ENCODE measurements at regions of chr3 and their contacts with region 1.

Region 1: GRCh38 chr3:150495563-150496168 is 50.6 kb downstream of the SERP1 start:
- DNase-seq: no peak
- H3K4me3 ChIP-seq: no peak overlapping the region
- H3K27ac ChIP-seq: no peak overlapping the region
- H3K4me1 ChIP-seq: no peaks in the 10 kb centered on the region
- H3K27me3 ChIP-seq: no peaks in the 10 kb centered on the region
- CTCF ChIP-seq: peak; percentile 67 to 78 (median 71)

Region 2: DNA sequence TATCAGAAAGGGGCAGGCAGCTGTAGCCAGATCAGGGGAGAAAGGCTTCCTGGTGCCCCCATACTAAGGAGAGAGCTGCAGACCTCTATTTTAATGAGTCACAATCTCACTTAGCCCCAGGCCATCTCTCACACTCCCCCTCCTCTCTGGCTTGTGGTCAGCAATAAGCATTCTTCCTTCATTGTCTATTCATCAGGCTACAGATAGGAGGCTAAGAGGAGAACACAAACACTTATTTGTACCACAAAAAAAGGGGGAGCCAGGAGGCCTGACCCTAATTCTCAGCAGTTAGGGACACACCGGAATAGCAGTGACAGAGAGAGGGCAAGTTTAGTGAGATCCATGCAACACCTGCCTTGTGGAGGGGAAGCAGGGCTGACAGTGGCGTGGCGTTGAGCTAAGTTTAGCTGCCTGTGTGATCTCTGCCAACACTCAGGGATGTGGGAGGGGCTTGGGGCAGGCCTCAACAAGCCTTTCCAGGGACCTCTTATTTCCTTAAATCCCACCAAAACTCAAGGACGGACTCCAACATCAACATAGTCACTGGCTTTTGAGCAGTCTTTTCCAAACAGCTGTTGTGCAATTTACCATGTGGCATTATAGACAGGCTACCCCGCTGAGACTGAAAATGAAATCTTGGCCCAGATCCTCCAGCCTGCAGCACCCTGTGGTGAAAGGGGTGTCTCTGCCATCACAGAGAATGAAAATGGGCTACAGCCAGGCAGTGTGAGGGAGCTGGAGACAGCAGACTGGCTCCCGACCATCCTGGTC is 279.4 kb before region 1 on chr3:
- intact Hi-C with region 1: loop called (anchors 2 kb)
- DNase-seq: peak; percentile 33 to 84
- H3K4me3 ChIP-seq: peak overlapping the region in 1 of 2 donors; percentile 39
- H3K27ac ChIP-seq: peak overlapping the region; percentile 75 to 80
- H3K4me1 ChIP-seq: peaks cover 5 to 10% of the 10 kb centered on the region in 2 donors
- H3K27me3 ChIP-seq: no peaks in the 10 kb centered on the region
- CTCF ChIP-seq: no peak

Region 3: DNA sequence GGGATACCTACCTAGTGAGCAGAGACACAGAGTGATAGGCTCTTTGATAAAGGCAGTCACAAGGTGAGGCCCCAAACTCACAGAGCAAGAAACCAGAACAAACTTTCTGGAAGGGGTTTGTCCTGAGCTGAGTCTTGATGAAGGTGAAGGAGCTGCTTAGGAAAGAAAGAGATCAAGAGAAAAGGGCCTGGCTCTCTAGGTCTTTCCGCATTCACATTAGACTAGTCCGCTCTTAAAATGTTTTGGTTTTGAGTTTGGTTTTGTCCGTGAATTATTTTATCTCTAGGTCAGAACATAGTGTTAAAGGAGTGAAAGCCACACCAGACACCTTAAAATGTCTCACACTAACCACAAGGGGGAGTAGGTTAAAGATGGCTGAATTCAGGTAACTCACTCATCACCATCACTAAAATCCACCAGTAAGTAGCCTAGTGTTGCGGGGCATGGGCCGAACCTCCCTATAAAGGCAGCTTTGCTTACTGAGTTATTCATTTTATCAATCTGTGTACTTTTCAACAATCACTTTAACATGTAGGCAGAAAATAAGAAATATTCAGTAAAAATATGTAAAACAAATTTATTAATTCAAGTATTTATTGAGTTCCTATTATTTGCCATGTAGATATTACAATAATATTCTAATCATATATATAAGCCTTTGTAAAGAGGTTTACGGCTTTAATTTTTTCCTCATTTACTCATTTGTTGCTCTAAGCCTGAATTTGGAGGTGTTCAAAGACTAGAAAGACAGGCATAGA is 209.1 kb before region 1 on chr3:
- intact Hi-C with region 1: loop called (anchors 5 kb)
- DNase-seq: no peak
- H3K4me3 ChIP-seq: no peak overlapping the region
- H3K27ac ChIP-seq: no peak overlapping the region
- H3K4me1 ChIP-seq: no peaks in the 10 kb centered on the region
- H3K27me3 ChIP-seq: no peaks in the 10 kb centered on the region
- CTCF ChIP-seq: peak; percentile 36 to 45 (median 37)

Region 4: DNA sequence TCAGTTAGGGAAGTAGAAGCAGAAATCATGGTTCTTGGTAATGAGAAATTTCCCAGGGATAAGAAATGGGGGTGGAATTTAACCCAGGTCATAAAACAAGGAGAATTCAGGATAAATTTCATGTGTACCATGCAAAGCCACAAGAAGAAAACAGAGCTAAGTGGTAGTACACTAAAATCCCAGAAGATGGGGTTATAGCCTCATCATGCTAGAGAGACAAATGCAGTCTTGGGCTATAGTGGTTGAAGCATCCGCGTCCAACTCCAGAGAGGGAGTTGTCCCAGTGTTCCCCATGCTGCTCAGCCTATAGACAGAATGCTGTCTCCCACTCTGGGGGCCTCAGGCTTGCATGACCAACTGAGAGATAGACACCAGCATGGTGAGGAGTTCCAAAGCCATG is 513.0 kb after region 1 on chr3:
- intact Hi-C with region 1: no loop called
- DNase-seq: no peak
- H3K4me3 ChIP-seq: no peak overlapping the region
- H3K27ac ChIP-seq: no peak overlapping the region
- H3K4me1 ChIP-seq: no peaks in the 10 kb centered on the region
- H3K27me3 ChIP-seq: no peaks in the 10 kb centered on the region
- CTCF ChIP-seq: no peak